Activated CD4-positive, alpha-beta T cell treated with anti-CD3 and anti-CD28 coated beads for 36 hours (primary cell): ENCODE measurements at regions of chr1 and their contacts with region 1.

Region 1: DNA sequence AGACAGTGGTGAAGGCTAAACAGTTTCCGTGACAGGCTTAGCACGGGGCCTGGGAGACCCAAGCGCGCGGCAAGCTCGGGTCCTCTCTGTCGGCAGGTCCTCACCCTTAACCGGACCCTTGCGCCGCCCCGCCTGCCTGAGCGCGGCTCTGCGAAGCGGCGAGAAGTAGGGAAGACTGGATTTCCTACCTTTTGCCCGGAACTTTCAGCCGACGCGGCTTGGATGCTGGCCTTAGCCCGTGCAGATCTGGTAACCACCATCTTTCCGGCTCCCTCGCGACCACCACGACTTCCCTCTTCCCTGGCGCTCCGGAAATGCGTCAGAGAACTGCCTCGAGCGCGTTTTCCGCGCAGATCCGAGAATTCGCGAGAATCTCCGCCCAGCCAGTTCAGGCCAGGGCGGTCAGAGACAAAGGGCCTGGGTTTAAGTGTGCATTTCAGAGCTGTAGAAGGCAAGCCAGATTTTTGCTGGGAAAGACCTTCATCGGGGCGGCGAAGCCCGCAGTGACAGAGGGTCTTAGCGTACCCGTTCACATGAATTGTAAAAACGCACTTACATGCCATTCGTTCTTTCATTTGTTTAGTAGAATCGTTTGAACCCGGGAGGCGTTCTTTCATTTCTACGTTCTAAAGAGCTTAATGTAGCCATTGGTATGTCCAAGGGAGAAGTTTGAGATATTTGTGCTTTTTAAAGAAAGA is at the start of gene DNTTIP2:
- DNase-seq: peak; percentile 94
- ATAC-seq: peak; percentile 93
- H3K4me3 Mint-ChIP-seq: peak within 1 kb of the TSS; percentile 92
- H3K27ac Mint-ChIP-seq: peak within 1 kb of the TSS; percentile 97
- H3K4me1 Mint-ChIP-seq: peaks cover 45% of the 10 kb centered on the region
- H3K27me3 Mint-ChIP-seq: no peaks in the 10 kb centered on the region
- total RNA-seq, gene DNTTIP2: 82.8 to 84.9 TPM

Region 2: DNA sequence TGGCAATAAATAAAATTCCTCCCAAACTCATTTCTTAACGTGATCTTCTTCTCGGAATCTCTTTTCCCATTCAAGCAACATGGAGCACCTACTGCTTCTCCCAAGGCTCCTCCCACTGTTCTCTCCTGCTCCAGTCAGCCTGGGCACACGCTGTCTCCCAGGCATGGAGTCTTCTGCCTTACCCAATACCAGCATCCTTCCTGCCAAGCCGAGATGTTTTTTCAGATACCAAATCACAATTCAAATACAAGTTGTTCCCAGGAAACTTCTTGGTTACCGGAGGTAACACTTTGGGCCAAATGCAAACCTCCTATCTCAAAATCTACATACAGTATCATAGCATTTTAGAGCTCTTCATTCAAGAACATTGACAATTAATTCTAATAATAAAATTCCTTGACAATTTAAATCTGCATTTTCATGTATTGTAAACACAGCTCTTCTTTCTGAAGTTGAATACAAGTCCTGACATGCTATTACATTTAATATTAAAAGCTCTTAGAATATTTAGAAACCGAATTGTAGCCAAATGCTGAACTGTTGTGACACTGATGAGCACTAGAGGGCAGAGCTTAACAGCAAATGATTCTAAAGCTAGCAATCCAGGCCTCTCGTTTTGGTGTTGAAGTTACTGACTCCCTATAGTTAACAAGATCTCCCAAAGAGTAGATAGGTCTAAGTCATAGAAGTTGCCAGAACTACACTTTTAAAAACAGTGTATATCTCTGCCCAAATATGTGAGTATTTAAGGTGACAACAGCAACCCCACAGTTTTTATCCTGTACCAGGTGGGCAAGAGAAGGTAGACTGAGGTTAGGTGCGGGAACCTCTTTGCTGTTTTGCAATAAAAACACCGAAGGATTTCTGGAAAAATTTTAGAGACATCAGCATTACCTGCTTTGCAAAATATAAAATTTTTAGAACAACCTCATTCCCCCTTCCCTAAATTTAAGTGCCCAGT is 249.7 kb before region 1 on chr1:
- CTCF ChIA-PET with region 1: interaction called, 5 read pairs
- POLR2A ChIA-PET with region 1: no interaction called
- intact Hi-C with region 1: loop called in 1 of 2 experiments (anchors 1 kb)
- DNase-seq: peak; percentile 56
- ATAC-seq: peak; percentile 78
- H3K4me3 Mint-ChIP-seq: no peak overlapping the region
- H3K27ac Mint-ChIP-seq: no peak overlapping the region
- H3K4me1 Mint-ChIP-seq: no peaks in the 10 kb centered on the region
- H3K27me3 Mint-ChIP-seq: no peaks in the 10 kb centered on the region

Region 3: GRCh38 chr1:93732514-93732913 is 146.5 kb before region 1 on chr1:
- CTCF ChIA-PET with region 1: no interaction called
- POLR2A ChIA-PET with region 1: no interaction called
- intact Hi-C with region 1: no loop called
- DNase-seq: no peak
- ATAC-seq: no peak
- H3K4me3 Mint-ChIP-seq: no peak overlapping the region
- H3K27ac Mint-ChIP-seq: no peak overlapping the region
- H3K4me1 Mint-ChIP-seq: no peaks in the 10 kb centered on the region
- H3K27me3 Mint-ChIP-seq: no peaks in the 10 kb centered on the region

Region 4: DNA sequence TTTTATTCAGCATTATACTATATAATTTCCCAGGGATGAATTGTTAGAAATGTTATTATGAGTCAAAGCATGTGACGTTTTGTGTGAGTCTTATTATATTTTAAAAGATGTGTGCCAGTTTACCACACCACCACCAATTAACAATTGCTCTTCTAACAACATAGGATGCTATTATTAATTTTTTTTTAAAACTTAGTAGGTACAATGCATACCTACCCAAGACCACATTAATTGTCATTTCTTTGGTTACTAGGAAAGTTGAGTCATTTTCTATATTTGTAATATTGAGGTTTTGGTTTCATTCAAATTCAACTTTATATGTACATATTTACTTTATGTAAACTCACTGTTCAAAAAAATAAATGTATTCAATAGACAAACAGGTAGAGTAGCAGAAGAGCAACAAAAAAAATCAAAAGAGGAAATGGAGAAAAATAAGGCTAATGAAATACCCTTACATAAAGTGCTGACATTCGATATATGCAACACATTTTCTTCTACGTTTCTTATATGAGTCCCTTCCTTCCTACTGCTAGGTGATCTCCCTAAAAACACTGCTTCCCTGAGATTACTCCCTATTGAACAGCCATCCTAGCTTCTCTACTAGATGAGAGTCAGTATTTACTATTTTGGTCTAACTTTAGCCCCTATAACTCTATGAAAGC is 20.6 kb after region 1 on chr1:
- CTCF ChIA-PET with region 1: no interaction called
- POLR2A ChIA-PET with region 1: interaction called, 4 read pairs
- intact Hi-C with region 1: loop called in 1 of 2 experiments (anchors 2 kb)
- DNase-seq: no peak
- ATAC-seq: no peak
- H3K4me3 Mint-ChIP-seq: no peak overlapping the region
- H3K27ac Mint-ChIP-seq: no peak overlapping the region
- H3K4me1 Mint-ChIP-seq: peaks cover 18% of the 10 kb centered on the region
- H3K27me3 Mint-ChIP-seq: no peaks in the 10 kb centered on the region

Region 5: GRCh38 chr1:93909146-93910050 is 30.4 kb after region 1 on chr1 and contains the start of gene GCLM:
- CTCF ChIA-PET with region 1: interaction called, 4 read pairs
- POLR2A ChIA-PET with region 1: interaction called, 7 read pairs
- intact Hi-C with region 1: loop called (anchors 1 to 2 kb)
- DNase-seq: peak; percentile 93
- ATAC-seq: peak; percentile 84
- H3K4me3 Mint-ChIP-seq: peak within 1 kb of the TSS; percentile 96
- H3K27ac Mint-ChIP-seq: peak within 1 kb of the TSS; percentile 97
- H3K4me1 Mint-ChIP-seq: peaks cover 34% of the 10 kb centered on the region
- H3K27me3 Mint-ChIP-seq: peaks cover 5% of the 10 kb centered on the region
- total RNA-seq, gene GCLM: 12.8 to 19.2 TPM

Region 6: DNA sequence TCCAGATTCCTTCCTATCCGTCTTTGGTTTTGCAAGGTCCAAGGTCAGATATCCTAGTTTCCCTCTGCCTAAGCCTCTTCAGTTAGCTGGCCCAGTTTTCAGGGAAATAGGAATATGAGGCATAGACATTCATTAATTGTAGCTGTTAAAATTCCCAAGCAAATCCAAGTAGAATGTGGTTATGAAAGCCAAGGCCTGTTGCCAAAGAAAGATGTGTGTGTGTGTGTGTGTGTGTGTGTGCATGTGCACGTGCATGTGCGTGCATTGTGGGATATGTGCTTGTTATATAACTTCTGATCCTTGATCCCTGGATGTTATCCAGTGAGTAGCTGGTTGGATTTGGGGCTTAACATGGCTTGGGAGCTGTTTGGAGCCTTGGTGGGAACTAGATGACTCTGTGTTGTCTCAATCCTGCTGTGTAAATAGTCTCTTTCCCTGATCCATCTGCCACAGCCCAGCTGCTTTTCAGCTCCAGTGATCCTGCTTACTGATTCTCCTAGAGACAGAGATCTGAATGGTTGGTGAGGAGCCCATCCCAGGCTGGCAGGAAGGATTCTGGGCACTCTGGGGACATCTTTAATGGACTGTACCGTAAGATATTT is 100.8 kb after region 1 on chr1:
- CTCF ChIA-PET with region 1: no interaction called
- POLR2A ChIA-PET with region 1: no interaction called
- intact Hi-C with region 1: no loop called
- DNase-seq: no peak
- ATAC-seq: no peak
- H3K4me3 Mint-ChIP-seq: no peak overlapping the region
- H3K27ac Mint-ChIP-seq: no peak overlapping the region
- H3K4me1 Mint-ChIP-seq: no peaks in the 10 kb centered on the region
- H3K27me3 Mint-ChIP-seq: no peaks in the 10 kb centered on the region